Brain microvascular endothelial cell (primary cell): ENCODE measurements at regions of chr2 and their contacts with region 1.

Region 1: GRCh38 chr2:56183643-56184499 is at the start of gene CCDC85A:
- DNase-seq: peak; percentile 65
- H3K4me3 ChIP-seq: peak within 1 kb of the TSS; percentile 54
- H3K27ac ChIP-seq: no peak within 1 kb of the TSS
- H3K27me3 ChIP-seq: peaks cover 36% of the 10 kb centered on the region
- CTCF ChIP-seq: peak; percentile 90

Region 2: DNA sequence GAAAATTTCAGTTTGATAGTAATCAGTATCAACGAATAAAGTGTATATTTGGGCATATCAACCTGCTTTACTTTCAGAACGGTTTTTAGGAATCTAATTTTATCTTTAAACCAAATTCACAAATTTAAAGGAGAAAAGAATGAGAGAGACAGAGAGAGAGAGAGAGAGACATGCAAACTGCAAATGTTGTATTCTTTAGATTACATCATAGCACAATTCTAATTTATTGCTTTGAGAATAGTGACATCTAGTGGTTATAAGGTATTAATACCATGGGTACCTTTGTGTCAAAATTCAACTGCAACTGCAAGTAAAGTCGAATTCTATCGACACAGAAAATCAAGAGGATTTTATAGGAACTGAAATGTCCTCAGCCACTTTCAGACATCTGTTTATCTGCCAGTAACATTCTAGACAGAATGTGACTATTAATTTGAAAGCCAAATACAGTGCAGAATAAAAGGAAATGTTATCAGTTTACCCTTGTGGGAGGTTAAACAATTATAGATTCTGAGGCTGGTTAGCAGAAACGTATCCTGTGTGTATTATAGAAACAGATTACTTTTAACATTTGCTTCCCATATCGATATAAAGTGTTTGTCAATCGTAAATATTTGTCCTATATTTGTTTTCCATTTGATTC is 1332.9 kb after region 1 on chr2:
- in situ Hi-C with region 1: loop called (anchors 25 kb)
- DNase-seq: no peak
- H3K4me3 ChIP-seq: no peak overlapping the region
- H3K27ac ChIP-seq: no peak overlapping the region
- H3K27me3 ChIP-seq: no peaks in the 10 kb centered on the region
- CTCF ChIP-seq: no peak